Activated CD8-positive, alpha-beta T cell treated with anti-CD3 and anti-CD28 coated beads, Interleukin-2, amount 10 ng/mL, durations not matched to agents 7 days and 5 days (primary cell): ENCODE measurements at regions of chr19 and their contacts with region 1.

Region 1: GRCh38 chr19:41775360-41775695 is 20.0 kb downstream of the CEACAM6 start:
- DNase-seq: no peak
- ATAC-seq: no peak
- H3K4me3 Mint-ChIP-seq: no peak overlapping the region
- H3K27ac Mint-ChIP-seq: no peak overlapping the region
- H3K4me1 Mint-ChIP-seq: peaks cover 22% of the 10 kb centered on the region
- H3K27me3 Mint-ChIP-seq: peaks cover 67% of the 10 kb centered on the region

Region 2: DNA sequence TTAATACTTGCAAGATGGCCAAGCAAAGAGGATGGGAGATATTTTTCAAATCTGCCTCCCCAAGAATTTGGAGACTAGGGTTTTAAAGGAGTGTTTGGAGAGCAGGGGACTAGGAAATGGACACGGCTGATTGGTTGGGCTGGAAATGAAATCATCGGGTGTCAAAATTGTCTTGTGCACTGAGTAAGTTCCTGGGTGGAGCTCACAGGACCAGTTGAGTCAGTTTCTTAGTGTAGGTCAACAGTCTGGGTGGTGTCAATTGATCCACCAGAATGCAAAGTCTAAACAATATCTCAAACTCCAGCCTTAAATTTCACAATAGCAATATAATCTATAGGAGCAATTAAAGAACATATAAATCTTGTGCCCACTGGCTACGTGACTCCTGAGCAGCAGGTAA is 125.5 kb before region 1 on chr19:
- CTCF ChIA-PET with region 1: no interaction called
- POLR2A ChIA-PET with region 1: no interaction called
- DNase-seq: no peak
- ATAC-seq: no peak
- H3K4me3 Mint-ChIP-seq: no peak overlapping the region
- H3K27ac Mint-ChIP-seq: no peak overlapping the region
- H3K4me1 Mint-ChIP-seq: no peaks in the 10 kb centered on the region
- H3K27me3 Mint-ChIP-seq: peaks cover 28% of the 10 kb centered on the region

Region 3: DNA sequence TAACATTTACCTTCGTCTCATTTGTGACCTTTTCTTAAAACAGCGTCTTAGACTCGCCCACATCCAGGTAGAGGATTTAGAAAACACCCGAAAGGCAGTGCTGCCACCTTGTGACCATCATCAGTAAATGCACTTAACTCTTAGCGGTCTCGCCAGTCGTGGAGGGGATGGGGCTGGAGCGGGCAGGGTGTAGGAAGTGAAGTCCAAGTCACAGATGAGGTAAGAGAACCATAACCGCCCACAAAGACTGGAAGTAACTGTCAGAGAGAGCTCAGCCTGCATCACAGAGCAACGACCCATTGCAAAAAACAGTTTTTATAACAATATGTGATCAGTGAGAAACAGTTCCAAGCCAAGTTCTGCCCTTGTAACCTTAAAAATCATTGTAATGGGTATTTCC is 10.3 kb after region 1 on chr19:
- CTCF ChIA-PET with region 1: interaction called, 17 read pairs
- POLR2A ChIA-PET with region 1: no interaction called
- DNase-seq: peak; percentile 85
- ATAC-seq: peak; percentile 93
- H3K4me3 Mint-ChIP-seq: no peak overlapping the region
- H3K27ac Mint-ChIP-seq: no peak overlapping the region
- H3K4me1 Mint-ChIP-seq: peaks cover 17% of the 10 kb centered on the region
- H3K27me3 Mint-ChIP-seq: peaks cover 31% of the 10 kb centered on the region